ENCODE measurements at regions of chr1 and their contacts with region 1.

Region 1: GRCh38 chr1:224387302-224387912 is 30.7 kb downstream of the CNIH4 start:
- DNase-seq: no peak
- ATAC-seq: no peak
- H3K4me3 ChIP-seq: no peak overlapping the region
- H3K27ac ChIP-seq: no peak overlapping the region
- H3K4me1 ChIP-seq: no peaks in the 10 kb centered on the region
- H3K27me3 ChIP-seq: no peaks in the 10 kb centered on the region
- CTCF ChIP-seq: no peak
- POLR2A ChIP-seq: no peak
- RAD21 ChIP-seq: no peak

Region 2: DNA sequence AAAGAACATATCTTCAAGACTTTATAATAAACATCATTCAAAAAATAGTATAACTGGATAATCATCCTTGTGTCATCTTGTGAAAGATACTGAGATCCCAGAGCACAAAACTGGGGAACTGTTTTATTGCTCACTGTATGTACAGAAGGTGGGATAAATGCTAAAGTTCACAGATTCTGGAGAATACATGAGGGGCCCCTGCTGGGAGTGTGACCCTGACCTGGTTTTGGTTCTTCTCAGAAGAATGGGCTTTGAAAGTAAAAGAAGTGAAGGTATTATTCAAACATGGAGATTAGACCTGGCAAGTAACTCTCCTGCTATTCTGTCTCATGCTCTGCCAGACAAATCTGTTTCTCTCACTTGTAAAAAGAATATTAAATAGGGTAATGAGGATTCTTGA is 32.7 kb after region 1 on chr1:
- CTCF ChIA-PET with region 1: no interaction called
- POLR2A ChIA-PET with region 1: interaction called, 3 read pairs
- RAD21 ChIA-PET with region 1: no interaction called
- intact Hi-C with region 1: loop called (anchors 5 kb)
- DNase-seq: no peak
- ATAC-seq: no peak
- H3K4me3 ChIP-seq: no peak overlapping the region
- H3K27ac ChIP-seq: no peak overlapping the region
- H3K4me1 ChIP-seq: no peaks in the 10 kb centered on the region
- H3K27me3 ChIP-seq: no peaks in the 10 kb centered on the region
- CTCF ChIP-seq: no peak
- POLR2A ChIP-seq: no peak
- RAD21 ChIP-seq: no peak

Region 3: GRCh38 chr1:224726441-224727182 is 339.2 kb after region 1 on chr1:
- CTCF ChIA-PET with region 1: no interaction called
- POLR2A ChIA-PET with region 1: no interaction called
- RAD21 ChIA-PET with region 1: no interaction called
- intact Hi-C with region 1: no loop called
- DNase-seq: no peak
- ATAC-seq: no peak
- H3K4me3 ChIP-seq: no peak overlapping the region
- H3K27ac ChIP-seq: no peak overlapping the region
- H3K4me1 ChIP-seq: no peaks in the 10 kb centered on the region
- H3K27me3 ChIP-seq: no peaks in the 10 kb centered on the region
- CTCF ChIP-seq: no peak
- POLR2A ChIP-seq: no peak
- RAD21 ChIP-seq: no peak